ENCODE measurements at regions of chr10 and their contacts with region 1.

Region 1: DNA sequence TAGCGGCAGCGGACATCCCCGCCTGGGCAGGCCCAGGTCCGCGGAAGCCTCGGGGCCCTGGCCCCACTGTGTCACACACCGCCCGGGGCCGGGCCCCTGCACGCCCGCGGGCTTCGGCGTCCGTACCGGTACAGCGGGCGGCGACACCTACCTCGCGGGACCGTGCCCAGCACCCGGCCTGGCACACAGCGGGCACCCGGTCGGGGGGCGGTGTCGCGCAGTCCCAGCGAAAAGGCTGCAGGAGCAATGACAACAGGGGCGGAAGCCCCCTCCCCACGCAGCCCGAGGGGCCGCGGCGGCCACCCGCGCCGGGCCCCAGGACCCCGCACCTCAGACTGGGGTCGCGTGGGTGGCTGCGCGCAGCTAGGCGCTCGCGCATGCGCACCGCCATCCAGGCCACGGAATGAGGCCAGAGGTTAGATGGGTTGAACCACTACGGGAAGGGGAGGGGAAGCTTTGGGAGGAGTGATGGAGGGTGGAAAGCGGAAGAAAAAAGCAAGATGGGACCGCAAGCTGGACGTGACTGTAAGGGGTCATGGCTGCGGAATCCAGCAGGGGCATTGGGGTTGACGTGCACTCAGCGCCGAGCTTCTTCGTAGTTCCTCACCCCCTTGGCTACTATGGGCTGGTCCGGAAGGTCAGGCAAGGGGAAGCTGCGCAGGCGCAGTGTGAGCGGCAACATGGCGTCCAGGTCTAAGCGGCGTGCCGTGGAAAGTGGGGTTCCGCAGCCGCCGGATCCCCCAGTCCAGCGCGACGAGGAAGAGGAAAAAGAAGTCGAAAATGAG is at the starts of genes BCCIP and UROS:
- DNase-seq: peak; percentile 97
- ATAC-seq: peak; percentile 87
- H3K4me3 ChIP-seq: peak within 1 kb of the TSS; percentile 79 to 97 (median 88)
- H3K4me3 Mint-ChIP-seq: no peak within 1 kb of the TSS
- H3K27ac ChIP-seq: peak within 1 kb of the TSS; percentile 95
- H3K27ac Mint-ChIP-seq: peak within 1 kb of the TSS; percentile 85
- H3K4me1 ChIP-seq: peaks cover 20 to 31% of the 10 kb centered on the region in 2 donors
- H3K4me1 Mint-ChIP-seq: peaks cover 32% of the 10 kb centered on the region
- H3K27me3 ChIP-seq: no peaks in the 10 kb centered on the region
- H3K27me3 Mint-ChIP-seq: no peaks in the 10 kb centered on the region
- CTCF ChIP-seq: no peak
- total RNA-seq, gene BCCIP: 40.7 and 43.5 TPM in 2 replicates
- total RNA-seq, gene UROS: 28.3 and 30.8 TPM in 2 replicates

Region 2: DNA sequence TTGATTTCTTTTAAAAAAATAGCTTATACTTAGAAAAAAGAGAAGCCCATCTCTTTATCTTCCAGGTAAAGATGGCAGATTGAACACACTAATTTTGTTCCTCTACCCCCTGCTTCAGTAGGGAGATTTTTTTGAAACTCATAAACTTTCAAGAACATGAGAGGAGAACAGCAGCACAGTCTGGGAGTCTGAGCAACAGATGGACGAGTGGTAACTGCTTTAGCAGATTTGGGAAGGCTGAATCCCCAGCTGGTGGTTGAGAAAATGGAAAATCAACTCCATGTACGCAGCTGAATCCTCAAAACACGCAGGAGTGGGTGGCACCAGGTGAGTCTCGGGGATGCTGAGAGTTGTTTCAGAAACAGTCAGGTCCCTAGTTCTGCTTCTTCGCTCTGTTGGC is 548.1 kb before region 1 on chr10:
- CTCF ChIA-PET with region 1: no interaction called
- POLR2A ChIA-PET with region 1: no interaction called
- intact Hi-C with region 1: no loop called
- DNase-seq: no peak
- ATAC-seq: no peak
- H3K4me3 ChIP-seq: no peak overlapping the region
- H3K4me3 Mint-ChIP-seq: no peak overlapping the region
- H3K27ac ChIP-seq: no peak overlapping the region
- H3K27ac Mint-ChIP-seq: no peak overlapping the region
- H3K4me1 ChIP-seq: no peaks in the 10 kb centered on the region
- H3K4me1 Mint-ChIP-seq: no peaks in the 10 kb centered on the region
- H3K27me3 ChIP-seq: no peaks in the 10 kb centered on the region
- H3K27me3 Mint-ChIP-seq: peaks cover 15% of the 10 kb centered on the region
- CTCF ChIP-seq: no peak

Region 3: GRCh38 chr10:125719146-125720001 is 103.7 kb before region 1 on chr10 and contains the start of gene EDRF1:
- CTCF ChIA-PET with region 1: no interaction called
- POLR2A ChIA-PET with region 1: interaction called, 6 read pairs
- intact Hi-C with region 1: loop called (anchors 1 kb)
- DNase-seq: peak; percentile 99
- ATAC-seq: peak; percentile 97
- H3K4me3 ChIP-seq: peak within 1 kb of the TSS; percentile 69 to 93 (median 89)
- H3K4me3 Mint-ChIP-seq: peak within 1 kb of the TSS; percentile 95
- H3K27ac ChIP-seq: peak within 1 kb of the TSS; percentile 77 to 93
- H3K27ac Mint-ChIP-seq: peak within 1 kb of the TSS; percentile 93
- H3K4me1 ChIP-seq: peaks cover 17% of the 10 kb centered on the region in 2 donors
- H3K4me1 Mint-ChIP-seq: peaks cover 30% of the 10 kb centered on the region
- H3K27me3 ChIP-seq: no peaks in the 10 kb centered on the region
- H3K27me3 Mint-ChIP-seq: no peaks in the 10 kb centered on the region
- CTCF ChIP-seq: no peak
- total RNA-seq, gene EDRF1: 63.0 and 69.4 TPM in 2 replicates

Region 4: GRCh38 chr10:125857185-125857750 is 34.2 kb after region 1 on chr10:
- CTCF ChIA-PET with region 1: no interaction called
- POLR2A ChIA-PET with region 1: no interaction called
- intact Hi-C with region 1: no loop called
- DNase-seq: no peak
- ATAC-seq: no peak
- H3K4me3 ChIP-seq: no peak overlapping the region
- H3K4me3 Mint-ChIP-seq: no peak overlapping the region
- H3K27ac ChIP-seq: no peak overlapping the region
- H3K27ac Mint-ChIP-seq: no peak overlapping the region
- H3K4me1 ChIP-seq: no peaks in the 10 kb centered on the region
- H3K4me1 Mint-ChIP-seq: no peaks in the 10 kb centered on the region
- H3K27me3 ChIP-seq: no peaks in the 10 kb centered on the region
- H3K27me3 Mint-ChIP-seq: no peaks in the 10 kb centered on the region
- CTCF ChIP-seq: no peak

Region 5: GRCh38 chr10:126041781-126042231 is 218.7 kb after region 1 on chr10:
- CTCF ChIA-PET with region 1: no interaction called
- POLR2A ChIA-PET with region 1: no interaction called
- intact Hi-C with region 1: loop called (anchors 2 kb)
- DNase-seq: peak; percentile 99
- ATAC-seq: peak; percentile 92
- H3K4me3 ChIP-seq: peak overlapping the region in 4 of 5 experiments; percentile 12 to 49 (median 38)
- H3K4me3 Mint-ChIP-seq: peak overlapping the region; percentile 87
- H3K27ac ChIP-seq: peak overlapping the region; percentile 96 to 98
- H3K27ac Mint-ChIP-seq: peak overlapping the region; percentile 99
- H3K4me1 ChIP-seq: peaks cover 38 to 41% of the 10 kb centered on the region in 2 donors
- H3K4me1 Mint-ChIP-seq: peaks cover 57% of the 10 kb centered on the region
- H3K27me3 ChIP-seq: no peaks in the 10 kb centered on the region
- H3K27me3 Mint-ChIP-seq: no peaks in the 10 kb centered on the region
- CTCF ChIP-seq: no peak